Breast epithelium (tissue), 4 donors: ENCODE measurements at regions of chr1 and their contacts with region 1.

Region 1: GRCh38 chr1:113579256-113580018 is 179.8 kb downstream of the PHTF1 start:
- DNase-seq: no peak
- H3K4me3 ChIP-seq: no peak overlapping the region
- H3K27ac ChIP-seq: peak overlapping the region in 1 of 2 donors; percentile 9
- H3K4me1 ChIP-seq: no peaks in the 10 kb centered on the region
- H3K27me3 ChIP-seq: no peaks in the 10 kb centered on the region
- CTCF ChIP-seq: no peak
- POLR2A ChIP-seq: no peak

Region 2: DNA sequence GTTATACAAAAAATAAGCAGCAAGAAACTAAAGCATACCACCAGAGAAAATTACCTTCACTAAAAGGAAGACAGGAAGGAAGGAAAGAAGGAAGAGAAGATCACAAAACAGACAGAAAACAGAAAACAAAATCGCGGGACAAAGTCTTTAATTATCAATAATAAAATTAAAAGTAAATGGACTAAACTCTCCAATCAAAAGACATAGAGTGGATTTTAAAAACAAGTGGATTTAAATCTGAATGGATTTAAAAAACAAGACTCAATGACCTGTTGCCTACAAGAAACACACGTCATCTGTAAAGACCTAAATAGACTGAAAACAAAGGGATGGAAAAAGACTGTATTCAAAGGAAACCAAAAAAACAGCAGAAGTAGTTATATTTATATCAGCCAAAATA is 264.8 kb before region 1 on chr1:
- intact Hi-C with region 1: loop called (anchors 5 kb)
- DNase-seq: no peak
- H3K4me3 ChIP-seq: no peak overlapping the region
- H3K27ac ChIP-seq: no peak overlapping the region
- H3K4me1 ChIP-seq: no peaks in the 10 kb centered on the region
- H3K27me3 ChIP-seq: no peaks in the 10 kb centered on the region
- CTCF ChIP-seq: no peak
- POLR2A ChIP-seq: no peak